ENCODE measurements at regions of chr1 and their contacts with region 1.

Region 1: GRCh38 chr1:39609618-39610331 is 29.7 kb downstream of the HEYL start:
- DNase-seq: peak; percentile 65
- H3K4me3 Mint-ChIP-seq: no peak overlapping the region
- H3K27ac Mint-ChIP-seq: no peak overlapping the region
- H3K4me1 Mint-ChIP-seq: peaks cover 7% of the 10 kb centered on the region
- H3K27me3 Mint-ChIP-seq: peaks cover 11% of the 10 kb centered on the region

Region 2: DNA sequence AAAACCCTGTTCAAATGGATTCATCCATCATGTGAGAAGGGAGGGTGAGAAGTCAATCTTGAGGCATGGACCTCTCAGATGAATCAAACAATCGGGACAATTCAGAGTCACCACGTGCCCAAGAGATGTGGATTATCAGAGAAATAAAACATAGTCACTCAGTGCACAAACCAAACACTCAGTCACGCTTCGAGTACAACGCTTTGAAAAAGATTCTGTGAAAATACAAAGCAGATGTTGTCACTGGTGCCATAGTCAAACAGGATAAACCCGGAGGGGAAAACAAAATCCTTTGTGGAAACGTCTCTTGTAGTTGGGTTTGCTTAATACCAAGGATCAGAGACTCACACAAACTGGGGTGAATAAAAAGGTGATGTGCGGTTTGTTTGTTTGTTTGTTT is 938.6 kb before region 1 on chr1:
- CTCF ChIA-PET with region 1: no interaction called
- POLR2A ChIA-PET with region 1: no interaction called
- DNase-seq: no peak
- H3K4me3 Mint-ChIP-seq: no peak overlapping the region
- H3K27ac Mint-ChIP-seq: no peak overlapping the region
- H3K4me1 Mint-ChIP-seq: no peaks in the 10 kb centered on the region
- H3K27me3 Mint-ChIP-seq: peaks cover 15% of the 10 kb centered on the region

Region 3: DNA sequence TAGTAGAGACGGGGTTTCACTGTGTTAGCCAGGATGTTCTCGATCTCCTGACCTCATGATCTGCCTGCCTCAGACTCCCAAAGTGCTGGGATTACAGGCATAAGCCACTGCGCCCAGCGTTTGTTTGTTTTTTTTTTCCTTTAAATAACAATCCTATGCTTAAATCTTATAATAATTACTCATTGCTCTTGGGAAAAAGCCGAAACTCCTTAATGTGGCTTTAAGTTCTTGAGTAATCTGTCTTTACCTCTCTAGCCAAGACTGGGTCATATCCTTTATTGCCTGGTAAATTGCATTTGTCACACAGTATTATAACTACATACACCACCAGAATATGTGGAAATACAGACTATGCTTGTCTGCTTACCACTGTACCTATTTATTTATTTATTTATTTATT is 308.2 kb before region 1 on chr1:
- CTCF ChIA-PET with region 1: no interaction called
- POLR2A ChIA-PET with region 1: no interaction called
- DNase-seq: no peak
- H3K4me3 Mint-ChIP-seq: no peak overlapping the region
- H3K27ac Mint-ChIP-seq: no peak overlapping the region
- H3K4me1 Mint-ChIP-seq: peaks cover 5% of the 10 kb centered on the region
- H3K27me3 Mint-ChIP-seq: no peaks in the 10 kb centered on the region

Region 4: DNA sequence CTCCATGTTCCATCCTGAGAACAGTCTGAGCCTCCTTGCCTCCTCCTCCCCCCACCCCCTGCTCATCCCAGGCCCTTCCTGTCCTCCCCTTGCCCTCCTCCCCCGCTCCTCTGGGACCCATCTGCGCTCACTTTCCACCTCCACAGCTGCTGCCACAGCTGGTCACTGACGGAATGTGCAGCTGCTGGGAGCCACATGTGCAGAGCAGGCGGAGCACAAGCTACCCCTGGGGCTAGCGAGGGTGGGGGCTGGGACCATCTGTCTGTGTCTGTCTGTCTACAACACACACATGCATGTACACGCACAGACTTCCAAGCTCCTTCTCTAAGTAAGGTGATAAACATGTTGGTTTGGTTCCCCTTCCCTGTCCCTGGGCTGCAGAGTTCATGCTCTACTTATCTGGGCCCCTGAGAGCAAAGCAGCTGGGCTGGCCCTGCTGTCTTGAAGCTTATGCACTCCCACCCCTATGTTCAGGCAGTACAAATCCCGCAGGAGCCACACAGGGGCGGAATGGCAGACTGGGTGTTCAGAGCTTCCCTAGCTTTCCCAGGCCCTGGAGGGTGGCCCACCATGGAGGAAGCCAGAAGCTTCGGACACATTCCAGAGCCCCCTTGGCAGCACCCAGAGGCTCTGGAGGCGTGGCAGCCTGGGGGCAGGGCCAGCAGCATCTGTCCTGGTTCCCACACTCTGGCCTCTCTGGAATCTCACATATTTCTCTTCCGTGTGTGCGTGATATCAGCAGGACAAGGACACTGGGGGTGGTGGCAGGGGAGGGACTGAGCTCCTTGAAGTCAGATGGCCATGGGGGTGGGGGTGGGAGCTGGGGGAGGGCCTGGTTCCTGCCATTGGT is 36.7 kb after region 1 on chr1:
- CTCF ChIA-PET with region 1: interaction called, 229 read pairs
- POLR2A ChIA-PET with region 1: interaction called, 3 read pairs
- DNase-seq: no peak
- H3K4me3 Mint-ChIP-seq: no peak overlapping the region
- H3K27ac Mint-ChIP-seq: no peak overlapping the region
- H3K4me1 Mint-ChIP-seq: no peaks in the 10 kb centered on the region
- H3K27me3 Mint-ChIP-seq: peaks cover 1% of the 10 kb centered on the region

Region 5: DNA sequence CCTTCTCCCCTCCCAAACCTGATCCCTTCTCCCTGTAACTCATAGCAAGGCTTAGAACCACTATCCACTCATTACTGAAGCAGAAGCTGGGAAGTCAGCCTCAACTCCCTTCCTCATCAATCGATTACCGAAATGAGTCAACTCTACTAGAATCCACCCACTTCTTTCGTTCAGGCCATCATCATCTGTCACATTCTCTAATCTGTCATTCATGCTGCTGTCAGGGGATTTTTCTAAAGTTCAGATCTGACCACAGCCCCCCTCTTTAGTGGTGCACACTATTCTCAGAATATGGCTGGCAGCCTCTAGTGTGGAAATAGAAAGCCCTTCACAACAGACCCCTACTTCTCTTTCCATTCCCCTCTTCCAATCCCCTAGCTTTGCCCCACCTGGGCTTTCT is 57.0 kb after region 1 on chr1:
- CTCF ChIA-PET with region 1: interaction called, 10 read pairs
- POLR2A ChIA-PET with region 1: no interaction called
- DNase-seq: peak; percentile 25
- H3K4me3 Mint-ChIP-seq: no peak overlapping the region
- H3K27ac Mint-ChIP-seq: peak overlapping the region; percentile 4
- H3K4me1 Mint-ChIP-seq: peaks cover 21% of the 10 kb centered on the region
- H3K27me3 Mint-ChIP-seq: peaks cover 19% of the 10 kb centered on the region

Region 6: DNA sequence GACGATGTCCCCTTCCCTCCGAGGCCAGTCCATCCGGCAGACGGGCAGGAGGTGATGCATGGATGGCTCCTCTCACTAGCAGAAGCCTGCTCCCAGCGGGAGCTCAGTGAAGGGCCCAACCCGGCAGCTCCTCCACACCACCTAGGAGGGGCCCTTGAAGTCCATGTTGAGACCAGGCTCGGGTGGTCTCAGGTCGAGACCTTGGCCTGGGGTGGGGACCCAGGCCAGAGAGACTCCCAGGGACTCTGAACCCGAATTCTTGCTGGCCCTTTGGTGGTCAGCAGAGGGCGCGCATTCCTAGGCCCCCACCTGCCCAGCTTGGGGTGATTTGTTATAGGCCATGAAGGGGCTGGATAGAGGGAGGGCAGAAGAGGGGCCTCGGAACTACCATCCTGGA is 62.8 kb after region 1 on chr1:
- CTCF ChIA-PET with region 1: interaction called, 12 read pairs
- POLR2A ChIA-PET with region 1: no interaction called
- DNase-seq: peak; percentile 41
- H3K4me3 Mint-ChIP-seq: no peak overlapping the region
- H3K27ac Mint-ChIP-seq: no peak overlapping the region
- H3K4me1 Mint-ChIP-seq: peaks cover 7% of the 10 kb centered on the region
- H3K27me3 Mint-ChIP-seq: peaks cover 31% of the 10 kb centered on the region

Region 7: GRCh38 chr1:39720094-39720999 is 110.6 kb after region 1 on chr1:
- CTCF ChIA-PET with region 1: interaction called, 29 read pairs
- POLR2A ChIA-PET with region 1: interaction called, 6 read pairs
- DNase-seq: no peak
- H3K4me3 Mint-ChIP-seq: no peak overlapping the region
- H3K27ac Mint-ChIP-seq: no peak overlapping the region
- H3K4me1 Mint-ChIP-seq: no peaks in the 10 kb centered on the region
- H3K27me3 Mint-ChIP-seq: peaks cover 44% of the 10 kb centered on the region

Region 8: GRCh38 chr1:39738622-39739366 is 129.0 kb after region 1 on chr1 and contains the start of gene PPIE:
- CTCF ChIA-PET with region 1: interaction called, 14 read pairs
- POLR2A ChIA-PET with region 1: no interaction called
- DNase-seq: peak; percentile 96
- H3K4me3 Mint-ChIP-seq: peak within 1 kb of the TSS; percentile 94
- H3K27ac Mint-ChIP-seq: peak within 1 kb of the TSS; percentile 84
- H3K4me1 Mint-ChIP-seq: peaks cover 43% of the 10 kb centered on the region
- H3K27me3 Mint-ChIP-seq: peaks cover 2% of the 10 kb centered on the region
- total RNA-seq, gene PPIE: 52.3 to 57.4 TPM

Region 9: GRCh38 chr1:39799770-39800470 is 190.1 kb after region 1 on chr1:
- CTCF ChIA-PET with region 1: interaction called, 41 read pairs
- POLR2A ChIA-PET with region 1: interaction called, 4 read pairs
- DNase-seq: peak; percentile 72
- H3K4me3 Mint-ChIP-seq: peak overlapping the region; percentile 63
- H3K27ac Mint-ChIP-seq: peak overlapping the region; percentile 80
- H3K4me1 Mint-ChIP-seq: peaks cover 13% of the 10 kb centered on the region
- H3K27me3 Mint-ChIP-seq: no peaks in the 10 kb centered on the region